ENCODE measurements at regions of chr2 and their contacts with region 1.

Region 1: GRCh38 chr2:120312861-120313694 is 32.9 kb upstream of the INHBB start:
- DNase-seq: no peak
- H3K4me3 ChIP-seq: peak overlapping the region; percentile 31 to 42
- H3K27ac ChIP-seq: peak overlapping the region; percentile 81
- H3K4me1 ChIP-seq: peaks cover 22% of the 10 kb centered on the region
- H3K27me3 ChIP-seq: no peaks in the 10 kb centered on the region
- CTCF ChIP-seq: peak; percentile 79 to 94 (median 86)
- POLR2A ChIP-seq: no peak

Region 2: GRCh38 chr2:120109186-120110061 is 203.7 kb before region 1 on chr2:
- intact Hi-C with region 1: loop called (anchors 5 kb)
- DNase-seq: no peak
- H3K4me3 ChIP-seq: no peak overlapping the region
- H3K27ac ChIP-seq: no peak overlapping the region
- H3K4me1 ChIP-seq: peaks cover 25% of the 10 kb centered on the region
- H3K27me3 ChIP-seq: no peaks in the 10 kb centered on the region
- CTCF ChIP-seq: no peak
- POLR2A ChIP-seq: no peak

Region 3: DNA sequence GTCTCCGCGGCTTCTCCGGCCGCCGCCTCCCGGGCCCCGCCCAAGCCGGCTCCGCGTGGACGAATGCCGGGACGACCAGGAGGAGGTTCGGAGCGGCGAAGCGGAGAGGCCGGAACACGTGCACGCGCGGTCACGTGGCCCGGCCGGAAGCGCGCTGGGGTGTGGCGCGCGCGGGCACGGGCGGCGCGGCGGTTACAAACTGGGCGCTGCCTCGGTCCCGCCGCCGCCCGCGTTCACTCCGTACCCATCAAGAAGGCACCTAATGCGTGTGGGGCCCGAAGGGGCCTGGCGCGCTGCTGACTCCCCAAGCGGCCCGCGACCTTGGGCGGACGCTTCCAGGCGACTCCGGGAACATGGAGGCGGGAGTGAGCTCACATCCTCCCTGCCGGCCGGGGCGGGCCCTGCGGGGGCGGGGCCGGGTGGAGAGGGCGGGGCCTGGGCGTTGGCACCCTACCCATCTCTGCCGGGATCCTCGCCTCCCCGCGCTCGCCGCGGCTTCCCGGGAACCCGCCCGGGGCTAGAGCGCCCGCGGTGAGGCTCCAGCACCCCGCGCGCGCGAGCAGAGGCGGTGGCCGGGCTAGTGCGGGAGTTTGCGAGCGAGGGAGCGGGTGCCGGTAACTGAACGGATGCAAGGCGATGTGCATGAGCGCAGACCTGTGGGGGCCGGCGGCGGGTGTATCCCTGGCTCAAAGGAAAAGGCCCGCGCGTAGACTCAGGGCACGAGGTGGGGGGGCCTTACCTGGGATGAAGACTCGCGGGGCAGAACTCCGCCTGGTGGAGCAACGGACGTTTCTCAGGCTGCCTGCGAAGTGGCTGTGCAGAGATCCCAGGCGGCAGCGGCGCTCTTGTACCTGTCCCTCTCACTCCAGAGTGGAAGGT is 89.8 kb before region 1 on chr2 and contains the start of gene TMEM185B:
- intact Hi-C with region 1: loop called (anchors 10 kb)
- DNase-seq: peak in 1 of 2 donors; percentile 90
- H3K4me3 ChIP-seq: peak within 1 kb of the TSS; percentile 68 to 93
- H3K27ac ChIP-seq: peak within 1 kb of the TSS; percentile 86
- H3K4me1 ChIP-seq: peaks cover 43% of the 10 kb centered on the region
- H3K27me3 ChIP-seq: no peaks in the 10 kb centered on the region
- CTCF ChIP-seq: no peak
- POLR2A ChIP-seq: peak in 1 of 2 donors; percentile 15
- total RNA-seq, gene TMEM185B: 29.5 TPM